Activated naive CD4-positive, alpha-beta T cell treated with anti-CD3 and anti-CD28 coated beads for 36 hours (primary cell): ENCODE measurements at regions of chr2 and their contacts with region 1.

Region 1: GRCh38 chr2:200963124-200963917 is at the start of gene ORC2:
- DNase-seq: peak; percentile 94
- H3K4me3 Mint-ChIP-seq: peak within 1 kb of the TSS; percentile 88
- H3K27ac Mint-ChIP-seq: peak within 1 kb of the TSS; percentile 94
- H3K4me1 Mint-ChIP-seq: peaks cover 56% of the 10 kb centered on the region
- H3K27me3 Mint-ChIP-seq: no peaks in the 10 kb centered on the region
- total RNA-seq, gene ORC2: 53.7 to 56.8 TPM

Region 2: DNA sequence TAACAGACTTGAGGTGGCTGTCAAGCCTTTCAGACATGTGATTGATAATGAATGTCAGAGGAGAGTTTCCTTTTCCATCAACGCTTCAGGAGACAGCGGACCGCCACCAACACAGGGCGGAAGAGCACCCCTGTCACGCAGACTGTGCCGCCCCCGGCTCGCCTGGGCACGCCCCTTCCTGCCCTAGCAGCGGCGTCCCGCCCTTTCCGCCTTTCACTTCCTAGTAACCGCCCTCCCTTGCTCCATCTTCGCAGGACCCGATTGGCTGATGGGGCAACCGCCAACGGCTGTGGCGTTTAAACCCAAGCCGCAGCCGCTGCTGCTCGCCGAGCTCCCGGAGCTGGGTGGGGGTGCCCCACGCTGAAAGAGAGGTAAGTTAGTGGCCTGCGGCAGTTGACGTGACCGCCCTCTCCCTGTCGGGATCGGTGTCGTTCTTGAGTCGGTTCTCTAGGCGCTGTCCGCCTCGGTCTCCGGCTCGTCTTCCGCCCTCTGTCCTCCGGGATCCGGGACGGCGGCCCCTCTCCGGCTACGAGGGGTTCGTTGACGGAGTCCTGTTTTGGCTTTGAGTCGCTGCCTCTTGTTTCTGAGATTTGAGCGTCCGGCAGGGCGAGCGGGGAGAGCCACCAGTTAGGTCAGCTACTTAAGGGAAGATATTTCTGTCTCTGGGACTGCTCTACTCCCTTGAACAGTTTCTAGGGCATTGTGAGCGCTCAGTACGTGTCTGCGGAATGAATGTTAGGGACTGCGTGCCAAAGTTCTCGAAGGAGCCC is 437.3 kb before region 1 on chr2 and contains the start of gene SGO2:
- CTCF ChIA-PET with region 1: no interaction called
- intact Hi-C with region 1: loop called (anchors 5 kb)
- DNase-seq: peak; percentile 98
- H3K4me3 Mint-ChIP-seq: peak within 1 kb of the TSS; percentile 90
- H3K27ac Mint-ChIP-seq: peak within 1 kb of the TSS; percentile 84
- H3K4me1 Mint-ChIP-seq: peaks cover 17% of the 10 kb centered on the region
- H3K27me3 Mint-ChIP-seq: no peaks in the 10 kb centered on the region
- total RNA-seq, gene SGO2: 39.7 to 40.0 TPM

Region 3: DNA sequence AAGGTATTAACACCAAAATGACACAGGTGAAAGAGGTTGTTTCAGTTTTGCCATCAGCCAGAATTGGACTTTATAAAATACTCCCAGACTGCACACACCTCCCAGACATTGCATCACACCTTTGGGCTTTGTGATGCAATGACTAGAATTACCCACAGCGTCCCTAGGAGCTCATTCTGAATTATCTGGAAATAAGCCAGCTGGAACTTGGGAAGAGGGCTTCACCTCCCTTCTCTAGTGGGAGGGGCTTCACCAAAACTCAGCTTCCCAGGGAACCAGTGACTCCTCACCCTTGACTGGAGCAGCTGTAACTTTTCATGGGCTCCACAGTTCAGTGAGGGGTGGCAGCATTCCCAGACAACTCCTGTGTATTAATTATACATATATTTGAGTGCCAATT is 234.7 kb before region 1 on chr2:
- CTCF ChIA-PET with region 1: no interaction called
- intact Hi-C with region 1: no loop called
- DNase-seq: no peak
- H3K4me3 Mint-ChIP-seq: no peak overlapping the region
- H3K27ac Mint-ChIP-seq: no peak overlapping the region
- H3K4me1 Mint-ChIP-seq: no peaks in the 10 kb centered on the region
- H3K27me3 Mint-ChIP-seq: peaks cover 6% of the 10 kb centered on the region

Region 4: GRCh38 chr2:200864176-200864976 is 98.9 kb before region 1 on chr2 and contains the start of gene CLK1:
- CTCF ChIA-PET with region 1: no interaction called
- intact Hi-C with region 1: loop called (anchors 2 kb)
- DNase-seq: peak; percentile 98
- H3K4me3 Mint-ChIP-seq: peak within 1 kb of the TSS; percentile 98
- H3K27ac Mint-ChIP-seq: peak within 1 kb of the TSS; percentile 100
- H3K4me1 Mint-ChIP-seq: peaks cover 32% of the 10 kb centered on the region
- H3K27me3 Mint-ChIP-seq: no peaks in the 10 kb centered on the region
- total RNA-seq, gene CLK1: 174 to 196 TPM

Region 5: GRCh38 chr2:200944467-200945394 is 18.6 kb before region 1 on chr2:
- CTCF ChIA-PET with region 1: interaction called, 9 read pairs
- intact Hi-C with region 1: loop called (anchors 1 kb)
- DNase-seq: peak; percentile 86
- H3K4me3 Mint-ChIP-seq: no peak overlapping the region
- H3K27ac Mint-ChIP-seq: peak overlapping the region; percentile 63
- H3K4me1 Mint-ChIP-seq: peaks cover 24% of the 10 kb centered on the region
- H3K27me3 Mint-ChIP-seq: no peaks in the 10 kb centered on the region

Region 6: GRCh38 chr2:201158111-201158929 is 195.0 kb after region 1 on chr2:
- CTCF ChIA-PET with region 1: interaction called, 7 read pairs
- intact Hi-C with region 1: loop called (anchors 1 kb)
- DNase-seq: peak; percentile 76
- H3K4me3 Mint-ChIP-seq: no peak overlapping the region
- H3K27ac Mint-ChIP-seq: peak overlapping the region; percentile 86
- H3K4me1 Mint-ChIP-seq: peaks cover 24% of the 10 kb centered on the region
- H3K27me3 Mint-ChIP-seq: no peaks in the 10 kb centered on the region

Region 7: GRCh38 chr2:201642579-201643215 is 679.4 kb after region 1 on chr2:
- CTCF ChIA-PET with region 1: no interaction called
- intact Hi-C with region 1: loop called (anchors 5 kb)
- DNase-seq: peak; percentile 87
- H3K4me3 Mint-ChIP-seq: peak overlapping the region; percentile 79
- H3K27ac Mint-ChIP-seq: peak overlapping the region; percentile 79
- H3K4me1 Mint-ChIP-seq: peaks cover 11% of the 10 kb centered on the region
- H3K27me3 Mint-ChIP-seq: no peaks in the 10 kb centered on the region